HAP-1 (cell line): ENCODE measurements at regions of chr2 and their contacts with region 1.

Region 1: DNA sequence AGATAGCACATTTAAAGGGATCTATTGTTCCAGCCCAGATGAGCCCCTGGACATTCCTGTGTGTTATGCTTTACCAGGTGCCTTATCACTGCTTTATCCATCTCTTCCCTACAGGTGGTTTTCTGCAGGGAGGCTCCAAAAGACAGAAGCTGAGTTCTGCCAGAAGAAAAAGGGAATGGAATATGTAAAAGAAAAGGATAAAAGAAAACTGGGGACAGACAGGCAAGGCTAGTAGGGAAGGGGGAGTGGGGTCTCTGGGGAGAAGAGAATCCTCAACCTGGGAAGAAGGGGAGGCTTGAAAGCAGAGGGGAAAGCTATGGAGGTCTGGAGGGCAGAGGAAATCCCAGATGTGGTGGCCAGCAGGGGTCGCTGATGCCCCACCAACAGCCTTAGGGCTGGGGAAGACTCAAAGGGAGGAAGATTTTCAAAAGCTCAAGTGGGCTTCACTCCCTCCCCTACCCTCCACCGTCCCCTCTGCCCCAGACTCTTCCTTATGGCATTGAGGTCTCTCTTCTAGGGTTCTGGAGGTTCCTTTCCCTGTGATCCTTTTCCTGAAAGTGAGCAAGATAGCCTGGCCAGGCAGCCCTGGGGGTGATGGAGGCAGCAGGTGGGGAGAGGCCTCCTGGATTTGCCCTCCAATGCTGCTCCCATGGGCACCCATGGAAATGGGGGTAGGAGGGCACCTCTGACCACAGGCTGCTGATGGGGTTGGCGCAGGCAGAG is 178.1 kb upstream of the PKDCC start:
- DNase-seq: peak; percentile 60 to 84
- H3K4me3 ChIP-seq: no peak overlapping the region
- H3K4me1 ChIP-seq: no peaks in the 10 kb centered on the region
- H3K27me3 ChIP-seq: peaks cover 10% of the 10 kb centered on the region

Region 2: GRCh38 chr2:40896358-40896757 is 973.3 kb before region 1 on chr2:
- in situ Hi-C with region 1: no loop called
- DNase-seq: no peak
- H3K4me3 ChIP-seq: no peak overlapping the region
- H3K4me1 ChIP-seq: peaks cover 9% of the 10 kb centered on the region
- H3K27me3 ChIP-seq: no peaks in the 10 kb centered on the region; the same call in 1 of the 2 replicates

Region 3: DNA sequence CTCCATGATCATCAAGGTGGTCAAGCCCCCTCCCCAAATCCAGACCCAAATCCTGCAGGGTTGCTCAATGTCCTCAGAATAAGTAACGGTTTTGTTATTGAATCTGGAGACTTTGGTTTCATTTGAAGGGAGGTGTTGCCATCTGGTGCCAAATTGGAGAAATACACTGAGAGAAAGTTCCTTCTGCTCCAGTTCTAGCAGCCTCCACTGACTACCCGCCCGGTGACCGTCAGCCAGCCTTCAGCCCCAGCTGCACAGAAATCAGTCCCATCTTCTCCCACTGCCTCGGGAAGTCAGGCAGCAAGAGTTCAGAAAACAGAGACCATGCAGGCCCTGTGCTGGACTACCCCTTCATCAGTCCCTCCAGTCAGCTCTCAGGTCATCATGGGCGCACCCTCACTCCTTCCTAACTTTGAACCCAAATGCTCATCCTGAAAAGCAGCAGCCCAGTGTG is 216.8 kb after region 1 on chr2:
- in situ Hi-C with region 1: loop called (anchors 5 kb)
- DNase-seq: peak; percentile 56 to 61
- H3K4me3 ChIP-seq: no peak overlapping the region
- H3K4me1 ChIP-seq: no peaks in the 10 kb centered on the region
- H3K27me3 ChIP-seq: 0 out of 2 replicates have a peak, but pooled peaks cover 2% of the 10 kb centered on the region

Region 4: GRCh38 chr2:42192652-42193566 is 323.2 kb after region 1 on chr2:
- in situ Hi-C with region 1: no loop called
- DNase-seq: no peak
- H3K4me3 ChIP-seq: no peak overlapping the region
- H3K4me1 ChIP-seq: peaks cover 10% of the 10 kb centered on the region
- H3K27me3 ChIP-seq: no peaks in the 10 kb centered on the region

Region 5: GRCh38 chr2:42328148-42328833 is 458.6 kb after region 1 on chr2:
- in situ Hi-C with region 1: loop called (anchors 25 kb)
- DNase-seq: peak in 1 of 2 experiments; percentile 24
- H3K4me3 ChIP-seq: no peak overlapping the region
- H3K4me1 ChIP-seq: no peaks in the 10 kb centered on the region
- H3K27me3 ChIP-seq: no peaks in the 10 kb centered on the region